ENCODE measurements at regions of chr4 and their contacts with region 1.

Region 1: DNA sequence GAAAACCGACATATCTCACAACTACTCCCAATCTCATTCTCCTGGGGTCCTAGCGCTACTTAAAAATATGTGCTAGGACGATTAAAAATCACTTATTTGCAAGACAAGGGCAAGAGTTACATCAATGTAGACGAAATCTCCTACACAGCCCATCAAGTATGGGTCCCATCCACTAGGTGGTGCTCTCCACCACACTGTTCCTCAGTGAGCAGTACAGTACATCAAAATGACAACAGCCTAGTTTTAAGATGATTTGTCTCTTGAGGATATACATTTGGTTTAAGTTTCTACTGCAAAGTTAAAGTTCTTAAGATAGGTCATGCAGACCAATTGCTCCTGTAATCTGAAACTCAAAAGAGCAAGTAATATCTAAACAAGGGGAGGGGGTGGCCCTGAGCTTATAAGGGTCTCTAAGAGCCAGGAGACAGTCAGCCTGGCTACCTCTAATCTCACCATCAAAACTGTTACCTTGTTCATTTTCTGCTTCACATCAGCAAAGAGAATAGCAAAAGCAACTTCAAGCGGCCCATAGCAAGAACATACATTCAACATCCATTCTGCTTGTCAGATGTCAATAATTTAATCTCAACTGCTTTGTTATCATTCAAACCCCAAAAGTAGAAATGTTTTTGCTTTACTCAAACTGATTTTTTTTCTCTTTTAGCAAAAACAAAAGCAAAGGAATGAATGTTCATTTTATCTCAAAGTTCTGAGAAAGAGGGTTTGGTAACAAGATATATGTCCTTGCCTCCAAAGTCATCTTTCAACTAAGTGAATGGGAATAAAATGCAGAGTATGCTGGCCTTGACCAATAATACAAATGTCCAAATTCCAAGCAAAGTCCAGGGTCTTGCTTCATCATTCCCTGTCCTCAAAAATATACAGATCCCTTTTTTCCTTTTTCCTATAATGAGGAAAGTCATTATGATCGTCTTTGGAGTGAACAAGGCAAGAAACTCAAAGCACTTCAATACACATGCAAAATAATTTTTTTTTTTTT is 53.1 kb downstream of the STX18 start:
- DNase-seq: peak; percentile 63 to 75
- H3K4me3 ChIP-seq: no peak overlapping the region
- H3K4me3 Mint-ChIP-seq: no peak overlapping the region
- H3K27ac Mint-ChIP-seq: no peak overlapping the region
- H3K4me1 ChIP-seq: peaks cover 9% of the 10 kb centered on the region
- H3K4me1 Mint-ChIP-seq: no peaks in the 10 kb centered on the region
- H3K27me3 ChIP-seq: no peaks in the 10 kb centered on the region
- H3K27me3 Mint-ChIP-seq: no peaks in the 10 kb centered on the region
- CTCF ChIP-seq: peak; percentile 77

Region 2: DNA sequence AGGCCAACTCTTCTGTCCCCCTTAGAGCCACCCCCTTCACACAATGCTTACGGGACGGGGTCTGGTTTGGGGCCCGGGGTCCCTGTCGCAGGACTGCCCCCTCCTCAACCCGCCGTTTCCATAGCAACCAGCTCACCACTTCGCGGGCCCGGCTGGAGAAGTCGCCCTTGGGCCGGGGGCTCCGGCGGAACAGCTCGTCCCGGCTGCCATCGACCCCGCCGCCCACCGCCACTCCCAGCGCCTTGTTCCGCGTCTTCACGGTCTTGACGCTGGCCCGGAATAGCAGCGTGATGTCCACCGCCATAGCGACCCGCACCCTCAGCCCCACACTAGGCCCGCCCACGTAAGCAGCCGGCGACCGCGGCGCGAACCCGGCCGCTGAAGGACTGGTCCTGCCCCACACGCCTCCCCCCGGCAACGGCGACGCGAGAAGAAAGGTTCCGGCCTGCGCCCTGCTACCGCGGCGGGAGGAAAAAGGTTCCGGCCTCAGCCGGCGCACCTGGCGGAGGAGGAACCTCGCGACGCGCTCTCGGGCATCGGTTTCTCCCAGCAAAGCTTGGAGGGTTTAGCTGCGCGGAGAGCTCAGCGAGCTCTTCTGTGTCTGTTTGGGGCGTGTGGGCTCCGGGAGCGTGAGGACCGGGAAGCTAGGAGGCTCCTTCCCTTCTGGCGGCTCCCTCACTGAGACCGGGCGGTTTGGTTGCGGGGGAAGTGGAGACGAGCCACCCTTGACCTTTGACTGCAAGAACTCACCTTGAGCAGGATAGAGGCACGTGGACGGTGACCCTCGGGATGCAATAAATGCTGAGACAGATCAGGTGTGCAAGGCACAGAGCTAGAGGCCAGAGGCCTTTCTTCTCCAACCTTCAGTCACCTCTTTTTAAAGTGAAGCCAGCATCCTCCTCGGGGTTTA is 53.2 kb after region 1 on chr4 and contains the start of gene STX18:
- CTCF ChIA-PET with region 1: interaction called, 4 read pairs
- POLR2A ChIA-PET with region 1: no interaction called
- intact Hi-C with region 1: loop called (anchors 5 kb)
- DNase-seq: peak; percentile 88 to 94
- H3K4me3 ChIP-seq: peak within 1 kb of the TSS; percentile 88
- H3K4me3 Mint-ChIP-seq: peak within 1 kb of the TSS; percentile 86
- H3K27ac Mint-ChIP-seq: peak within 1 kb of the TSS; percentile 95
- H3K4me1 ChIP-seq: peaks cover 6% of the 10 kb centered on the region; the same call in 1 of the 2 replicates
- H3K4me1 Mint-ChIP-seq: peaks cover 8% of the 10 kb centered on the region
- H3K27me3 ChIP-seq: no peaks in the 10 kb centered on the region
- H3K27me3 Mint-ChIP-seq: no peaks in the 10 kb centered on the region
- CTCF ChIP-seq: no peak
- total RNA-seq, gene STX18: 32.5 and 36.5 TPM in 2 replicates

Region 3: DNA sequence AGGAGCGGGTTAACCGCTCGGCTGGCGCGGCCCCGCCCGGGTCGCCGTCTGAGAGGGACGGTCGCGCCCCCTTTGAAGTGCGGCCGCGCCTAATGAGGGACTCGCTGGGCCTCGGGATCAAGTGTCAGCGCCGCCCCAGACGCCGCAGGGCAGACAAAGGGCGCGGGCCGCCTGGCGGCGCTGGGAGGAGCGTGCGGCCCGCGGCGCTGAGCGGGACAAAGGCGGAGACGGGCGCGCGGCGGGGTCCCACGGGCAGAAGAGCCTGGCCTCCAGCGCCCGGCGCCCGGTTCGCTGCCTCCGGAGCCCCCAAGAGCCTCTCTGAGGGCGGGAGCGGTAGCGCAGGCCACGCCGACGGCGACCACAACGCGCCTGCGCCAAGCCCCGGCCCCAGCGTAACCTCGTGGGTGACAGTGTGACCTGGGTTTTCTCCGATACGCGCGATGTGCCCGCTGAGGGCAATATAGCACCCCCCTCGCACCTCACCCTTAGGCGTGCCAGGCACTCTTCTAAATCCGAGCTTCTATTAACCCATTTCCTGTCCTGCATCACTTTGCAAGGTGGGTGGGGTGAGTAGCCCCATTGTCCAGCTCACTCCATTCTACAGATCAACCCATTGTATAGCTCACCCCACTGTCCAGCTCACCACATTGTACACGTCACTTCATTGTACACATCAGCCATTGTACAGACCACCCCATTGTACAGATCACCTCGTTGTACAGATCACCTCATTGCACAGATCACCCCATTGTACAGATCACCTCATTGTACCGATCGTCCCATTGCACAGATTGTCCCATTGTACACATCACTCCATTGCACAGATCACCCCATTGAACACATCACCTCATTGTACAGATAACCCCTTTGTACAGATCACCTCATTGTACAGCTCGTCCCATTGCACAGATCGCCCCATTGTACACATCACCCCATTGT is 86.8 kb after region 1 on chr4:
- CTCF ChIA-PET with region 1: no interaction called
- POLR2A ChIA-PET with region 1: no interaction called
- intact Hi-C with region 1: loop called (anchors 1 kb)
- DNase-seq: peak; percentile 70 to 79
- H3K4me3 ChIP-seq: peak overlapping the region; percentile 48
- H3K4me3 Mint-ChIP-seq: peak overlapping the region; percentile 67
- H3K27ac Mint-ChIP-seq: peak overlapping the region; percentile 71
- H3K4me1 ChIP-seq: peaks cover 6% of the 10 kb centered on the region
- H3K4me1 Mint-ChIP-seq: peaks cover 16% of the 10 kb centered on the region
- H3K27me3 ChIP-seq: no peaks in the 10 kb centered on the region
- H3K27me3 Mint-ChIP-seq: no peaks in the 10 kb centered on the region
- CTCF ChIP-seq: peak; percentile 17 to 22

Region 4: GRCh38 chr4:4758681-4759080 is 270.0 kb after region 1 on chr4:
- CTCF ChIA-PET with region 1: interaction called, 3 read pairs
- POLR2A ChIA-PET with region 1: no interaction called
- intact Hi-C with region 1: loop called (anchors 10 kb)
- DNase-seq: no peak
- H3K4me3 ChIP-seq: no peak overlapping the region
- H3K4me3 Mint-ChIP-seq: no peak overlapping the region
- H3K27ac Mint-ChIP-seq: no peak overlapping the region
- H3K4me1 ChIP-seq: no peaks in the 10 kb centered on the region
- H3K4me1 Mint-ChIP-seq: no peaks in the 10 kb centered on the region
- H3K27me3 ChIP-seq: no peaks in the 10 kb centered on the region
- H3K27me3 Mint-ChIP-seq: no peaks in the 10 kb centered on the region
- CTCF ChIP-seq: no peak

Region 5: GRCh38 chr4:4995103-4995907 is 506.6 kb after region 1 on chr4:
- CTCF ChIA-PET with region 1: no interaction called
- POLR2A ChIA-PET with region 1: no interaction called
- intact Hi-C with region 1: loop called (anchors 5 kb)
- DNase-seq: peak; percentile 75 to 82
- H3K4me3 ChIP-seq: no peak overlapping the region
- H3K4me3 Mint-ChIP-seq: peak overlapping the region; percentile 30
- H3K27ac Mint-ChIP-seq: no peak overlapping the region
- H3K4me1 ChIP-seq: 0 out of 2 replicates have a peak, but pooled peaks cover 6% of the 10 kb centered on the region
- H3K4me1 Mint-ChIP-seq: no peaks in the 10 kb centered on the region
- H3K27me3 ChIP-seq: no peaks in the 10 kb centered on the region
- H3K27me3 Mint-ChIP-seq: peaks cover 3% of the 10 kb centered on the region
- CTCF ChIP-seq: peak; percentile 84 to 90

Measured in Caco-2 (cell line).